ENCODE measurements at regions of chr12 and their contacts with region 1.

Region 1: DNA sequence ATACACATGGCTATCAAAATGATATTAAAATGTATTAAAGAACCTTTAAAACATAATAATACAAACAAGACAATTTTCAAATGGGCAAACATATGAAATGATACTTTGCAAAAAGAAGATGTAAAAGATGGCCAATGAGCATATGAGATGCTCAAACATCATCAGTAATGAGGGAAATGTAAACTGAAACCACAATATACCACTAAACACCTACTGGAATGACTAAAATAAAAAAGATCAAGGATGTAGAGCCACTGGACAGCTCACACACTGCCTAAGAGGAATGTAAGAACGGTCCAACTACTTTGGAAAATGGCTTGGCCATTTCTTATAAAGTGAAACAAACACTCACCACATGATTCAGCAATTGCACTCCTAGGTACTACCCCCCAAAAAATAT is 97.3 kb upstream of the BBS10 start:
- DNase-seq: no peak
- H3K4me3 Mint-ChIP-seq: no peak overlapping the region
- H3K27ac Mint-ChIP-seq: no peak overlapping the region
- H3K4me1 Mint-ChIP-seq: peaks cover 43% of the 10 kb centered on the region
- H3K27me3 Mint-ChIP-seq: no peaks in the 10 kb centered on the region

Region 2: GRCh38 chr12:76462668-76463224 is 17.3 kb after region 1 on chr12:
- CTCF ChIA-PET with region 1: no interaction called
- POLR2A ChIA-PET with region 1: no interaction called
- intact Hi-C with region 1: loop called (anchors 2 kb)
- DNase-seq: no peak
- H3K4me3 Mint-ChIP-seq: no peak overlapping the region
- H3K27ac Mint-ChIP-seq: no peak overlapping the region
- H3K4me1 Mint-ChIP-seq: peaks cover 38% of the 10 kb centered on the region
- H3K27me3 Mint-ChIP-seq: no peaks in the 10 kb centered on the region